ENCODE measurements at regions of chr14 and their contacts with region 1.

Region 1: GRCh38 chr14:93939304-93940229 is 12.4 kb downstream of the FAM181A start:
- DNase-seq: peak; percentile 71
- H3K27ac ChIP-seq: peak overlapping the region; percentile 88; the same call in 1 of the 2 replicates
- CTCF ChIP-seq: peak; percentile 70

Region 2: DNA sequence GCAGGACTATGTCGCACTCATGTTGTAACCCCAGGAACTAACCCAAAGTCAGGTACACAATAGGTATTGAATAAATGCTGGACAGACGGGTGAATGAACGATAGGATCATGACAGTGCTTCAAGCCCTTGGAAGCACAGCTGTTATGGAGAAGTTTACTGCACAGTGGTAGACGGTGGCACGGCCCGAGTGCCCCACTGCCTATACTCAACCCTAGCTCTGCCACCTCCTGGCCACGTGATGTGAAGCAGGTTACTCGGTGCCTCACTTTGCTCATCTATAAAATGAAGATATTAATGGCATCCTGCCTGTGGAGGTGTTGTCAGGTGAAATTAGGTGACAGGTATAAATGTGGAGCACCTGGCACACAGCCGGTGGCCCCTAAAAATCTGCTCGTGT is 31.0 kb after region 1 on chr14:
- CTCF ChIA-PET with region 1: interaction called, 24 read pairs
- POLR2A ChIA-PET with region 1: no interaction called
- DNase-seq: peak; percentile 38
- H3K27ac ChIP-seq: no peak overlapping the region
- CTCF ChIP-seq: peak; percentile 37

Region 3: DNA sequence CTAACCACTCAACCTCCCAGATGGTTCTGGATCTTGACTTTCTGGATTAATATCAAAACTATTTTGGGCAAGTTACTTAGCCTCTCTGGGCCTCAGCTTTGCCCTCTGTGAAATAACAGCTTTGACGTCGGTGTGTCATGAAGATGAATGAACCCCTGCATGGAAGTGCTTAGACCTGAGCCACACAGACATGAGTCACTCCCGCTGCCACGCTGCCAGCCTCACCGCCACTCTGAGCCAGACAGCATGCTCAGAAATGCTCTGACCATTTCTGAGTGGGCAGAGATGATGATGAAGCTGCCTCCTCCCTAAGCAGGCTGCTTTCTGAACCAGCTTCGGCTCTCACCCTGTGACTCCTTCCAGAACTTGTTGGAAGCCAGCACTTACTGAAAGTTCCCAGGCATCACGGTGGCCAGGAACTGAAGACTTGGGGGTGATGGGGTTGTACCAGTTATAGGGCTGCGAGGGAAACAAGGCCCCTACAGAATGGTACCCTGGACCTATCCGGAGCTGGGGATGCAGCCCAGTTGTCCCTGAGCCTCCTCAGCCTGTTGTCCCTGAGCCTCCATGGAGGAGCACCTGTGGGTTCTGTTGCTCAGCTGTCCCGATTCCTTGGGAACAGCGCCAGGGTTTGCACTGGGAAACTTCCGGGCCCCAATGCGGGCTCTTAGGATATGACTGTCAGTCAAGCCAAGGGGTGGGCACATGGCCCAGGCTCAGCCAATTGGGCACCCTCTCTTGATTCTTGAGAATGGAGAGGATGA is 55.5 kb after region 1 on chr14:
- CTCF ChIA-PET with region 1: interaction called, 39 read pairs
- POLR2A ChIA-PET with region 1: no interaction called
- DNase-seq: peak; percentile 66
- H3K27ac ChIP-seq: peak overlapping the region; percentile 56
- CTCF ChIP-seq: no peak

Region 4: GRCh38 chr14:94001501-94002396 is 62.2 kb after region 1 on chr14:
- CTCF ChIA-PET with region 1: interaction called, 39 read pairs
- POLR2A ChIA-PET with region 1: interaction called, 3 read pairs
- DNase-seq: peak; percentile 67
- H3K27ac ChIP-seq: no peak overlapping the region
- CTCF ChIP-seq: peak; percentile 93

Measured in RWPE1 (cell line).